Left cardiac atrium (tissue), 4 donors: ENCODE measurements at regions of chr5 and their contacts with region 1.

Region 1: GRCh38 chr5:142769741-142770631 is at the start of gene ARHGAP26:
- DNase-seq: peak; percentile 98
- ATAC-seq: peak; percentile 98 to 99
- total RNA-seq, gene ARHGAP26: 29.6 to 50.2 TPM

Region 2: DNA sequence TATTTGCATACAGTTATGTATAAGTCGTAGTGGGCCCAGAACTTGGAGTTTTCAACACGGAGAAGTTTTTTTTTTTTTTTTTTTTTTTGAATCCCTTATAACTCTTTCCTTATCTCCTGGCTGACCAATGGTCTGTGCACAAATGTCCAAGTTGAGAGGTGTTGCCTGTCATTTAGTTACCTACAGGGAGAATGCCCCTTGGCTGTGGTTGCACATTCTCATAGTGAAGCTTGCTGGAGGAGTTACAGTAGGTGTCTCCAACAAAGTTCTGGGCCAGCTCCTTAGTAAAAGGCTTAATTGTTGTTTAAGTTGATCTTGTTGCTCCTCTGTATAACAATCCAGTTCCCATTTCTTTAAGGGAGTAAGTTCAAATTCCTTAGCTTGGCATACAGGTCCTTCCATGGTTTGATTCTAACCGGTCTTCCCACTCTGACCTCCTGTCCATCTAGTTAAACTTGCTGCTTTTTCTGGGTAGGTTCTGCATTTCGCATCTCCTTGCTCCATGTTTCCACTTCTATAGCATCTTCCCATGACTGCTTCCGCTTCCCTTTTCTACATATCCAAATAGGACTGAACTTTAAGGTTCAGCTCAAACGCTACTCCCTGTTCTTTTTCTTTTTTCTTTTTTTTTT is 95.5 kb after region 1 on chr5:
- intact Hi-C with region 1: loop called in 1 of 2 experiments (anchors 2 kb)
- DNase-seq: no peak
- ATAC-seq: no peak

Region 3: GRCh38 chr5:142874537-142874936 is 104.6 kb after region 1 on chr5:
- intact Hi-C with region 1: loop called (anchors 2 to 5 kb)
- DNase-seq: peak; percentile 91
- ATAC-seq: peak; percentile 63 to 65

Region 4: DNA sequence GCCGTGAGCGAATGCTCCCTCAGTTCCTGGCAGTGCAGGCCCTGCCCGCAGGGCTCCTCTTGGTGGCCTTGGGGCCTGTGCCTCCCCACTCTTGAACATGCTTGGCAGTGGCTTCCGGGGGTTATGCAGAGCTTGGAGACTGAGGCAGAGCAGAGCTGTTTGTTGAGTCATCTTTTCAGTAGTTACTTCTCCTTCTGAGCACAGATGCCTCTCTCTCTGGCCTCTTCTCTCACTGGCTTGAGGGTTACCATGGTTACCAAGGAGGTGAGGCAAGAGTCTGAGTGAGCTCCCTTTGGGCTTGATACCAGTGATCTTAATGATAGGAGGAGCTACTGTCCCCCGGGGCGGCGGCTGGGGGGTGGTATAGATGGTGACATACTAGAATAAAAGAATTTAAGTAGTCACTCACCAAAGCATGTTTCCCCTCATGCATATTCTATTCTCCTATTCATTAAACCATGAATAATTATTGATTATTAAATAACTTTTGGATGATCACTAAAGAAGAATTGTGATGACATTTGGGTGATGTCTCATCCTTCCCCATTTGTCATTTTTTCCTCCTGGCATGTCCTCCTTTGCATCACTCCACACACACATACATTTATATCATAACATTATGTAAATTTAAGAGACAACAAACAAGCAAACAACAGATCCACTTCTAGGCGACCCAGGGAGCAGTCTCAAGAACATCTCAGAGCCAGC is 111.2 kb after region 1 on chr5:
- intact Hi-C with region 1: loop called in 1 of 2 experiments (anchors 5 kb)
- DNase-seq: no peak
- ATAC-seq: peak in 1 of 2 donors; percentile 34

Region 5: GRCh38 chr5:142894749-142895148 is 124.8 kb after region 1 on chr5:
- intact Hi-C with region 1: no loop called
- DNase-seq: no peak
- ATAC-seq: peak; percentile 63 to 67